Activated T-helper 2 cell treated with anti-CD3 and anti-CD28 coated beads, Interferon-gamma antibody, Interleukin-2, Interleukin-4, amounts not matched to agents 10 μg/mL and 5 μg/mL and 100 μg/mL, durations not matched to agents 14 hours and 24 hours and 36 hours (primary cell): ENCODE measurements at regions of chr14 and their contacts with region 1.

Region 1: DNA sequence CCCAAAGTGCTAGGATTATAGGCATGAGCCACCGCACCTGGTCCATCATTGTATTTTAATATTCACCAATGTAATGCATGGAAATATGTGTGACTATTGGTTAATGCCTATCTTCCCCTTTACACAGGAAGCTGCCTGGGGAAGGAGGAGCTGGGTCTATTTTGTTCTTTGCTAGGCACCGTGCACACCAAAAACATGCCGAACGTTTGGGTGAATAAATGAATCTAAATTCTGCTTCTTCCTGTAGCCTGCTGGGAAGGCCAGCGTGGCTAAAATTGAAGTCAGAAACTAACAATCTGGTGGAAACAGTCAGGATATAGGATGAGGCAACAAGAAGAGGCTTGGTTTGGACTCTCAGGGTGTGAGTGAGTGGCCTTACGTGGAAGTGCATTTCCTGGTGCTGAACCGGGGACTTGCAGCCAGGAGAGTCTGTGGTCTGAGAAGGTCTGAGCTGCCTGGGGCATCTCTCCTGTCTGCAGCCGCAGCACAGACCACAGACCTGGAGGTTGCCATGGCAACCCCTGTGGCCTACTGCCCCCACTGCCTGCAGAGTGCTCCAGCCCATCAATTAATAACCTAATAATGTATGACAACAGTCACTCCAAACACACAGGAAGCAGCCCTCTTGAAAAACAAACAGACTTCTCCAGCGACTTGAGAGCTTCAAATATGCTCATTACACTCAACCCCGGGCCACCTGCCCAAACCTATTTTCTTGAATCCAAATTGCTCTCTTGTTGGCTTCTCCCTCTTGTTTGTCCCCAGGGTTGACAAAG is 5.5 kb upstream of the GPR68 start:
- DNase-seq: peak; percentile 55
- H3K4me3 Mint-ChIP-seq: peak overlapping the region; percentile 23
- H3K27ac Mint-ChIP-seq: peak overlapping the region; percentile 92
- H3K4me1 Mint-ChIP-seq: peaks cover 68% of the 10 kb centered on the region
- H3K27me3 Mint-ChIP-seq: no peaks in the 10 kb centered on the region

Region 2: GRCh38 chr14:91177073-91178034 is 72.7 kb before region 1 on chr14:
- intact Hi-C with region 1: loop called (anchors 2 kb)
- DNase-seq: peak; percentile 69
- H3K4me3 Mint-ChIP-seq: no peak overlapping the region
- H3K27ac Mint-ChIP-seq: peak overlapping the region; percentile 86
- H3K4me1 Mint-ChIP-seq: peaks cover 17% of the 10 kb centered on the region
- H3K27me3 Mint-ChIP-seq: no peaks in the 10 kb centered on the region

Region 3: DNA sequence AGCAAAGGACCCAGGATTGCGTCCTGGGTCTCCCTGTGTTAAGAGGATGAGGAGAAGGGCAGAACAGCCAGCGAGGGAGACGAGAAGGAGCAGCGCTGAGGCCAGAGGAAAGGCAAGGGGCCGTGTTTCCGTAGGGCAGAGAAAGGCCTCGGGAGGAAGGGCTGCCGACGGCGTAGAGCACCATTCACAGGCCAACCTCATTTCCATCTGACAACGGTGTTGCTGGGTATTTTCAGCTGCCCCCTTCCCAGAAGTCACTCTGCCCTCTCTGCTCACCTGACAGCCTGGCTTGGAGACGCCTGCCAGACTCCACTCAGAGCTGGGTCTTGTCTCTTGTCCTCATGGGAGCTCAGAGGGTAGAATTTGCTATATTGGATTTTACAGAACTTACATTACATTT is 57.0 kb before region 1 on chr14:
- intact Hi-C with region 1: loop called (anchors 5 kb)
- DNase-seq: no peak
- H3K4me3 Mint-ChIP-seq: no peak overlapping the region
- H3K27ac Mint-ChIP-seq: no peak overlapping the region
- H3K4me1 Mint-ChIP-seq: peaks cover 37% of the 10 kb centered on the region
- H3K27me3 Mint-ChIP-seq: no peaks in the 10 kb centered on the region

Region 4: GRCh38 chr14:91228112-91229004 is 21.7 kb before region 1 on chr14:
- intact Hi-C with region 1: no loop called
- DNase-seq: peak; percentile 76
- H3K4me3 Mint-ChIP-seq: peak overlapping the region; percentile 75
- H3K27ac Mint-ChIP-seq: peak overlapping the region; percentile 100
- H3K4me1 Mint-ChIP-seq: peaks cover 80% of the 10 kb centered on the region
- H3K27me3 Mint-ChIP-seq: no peaks in the 10 kb centered on the region

Region 5: DNA sequence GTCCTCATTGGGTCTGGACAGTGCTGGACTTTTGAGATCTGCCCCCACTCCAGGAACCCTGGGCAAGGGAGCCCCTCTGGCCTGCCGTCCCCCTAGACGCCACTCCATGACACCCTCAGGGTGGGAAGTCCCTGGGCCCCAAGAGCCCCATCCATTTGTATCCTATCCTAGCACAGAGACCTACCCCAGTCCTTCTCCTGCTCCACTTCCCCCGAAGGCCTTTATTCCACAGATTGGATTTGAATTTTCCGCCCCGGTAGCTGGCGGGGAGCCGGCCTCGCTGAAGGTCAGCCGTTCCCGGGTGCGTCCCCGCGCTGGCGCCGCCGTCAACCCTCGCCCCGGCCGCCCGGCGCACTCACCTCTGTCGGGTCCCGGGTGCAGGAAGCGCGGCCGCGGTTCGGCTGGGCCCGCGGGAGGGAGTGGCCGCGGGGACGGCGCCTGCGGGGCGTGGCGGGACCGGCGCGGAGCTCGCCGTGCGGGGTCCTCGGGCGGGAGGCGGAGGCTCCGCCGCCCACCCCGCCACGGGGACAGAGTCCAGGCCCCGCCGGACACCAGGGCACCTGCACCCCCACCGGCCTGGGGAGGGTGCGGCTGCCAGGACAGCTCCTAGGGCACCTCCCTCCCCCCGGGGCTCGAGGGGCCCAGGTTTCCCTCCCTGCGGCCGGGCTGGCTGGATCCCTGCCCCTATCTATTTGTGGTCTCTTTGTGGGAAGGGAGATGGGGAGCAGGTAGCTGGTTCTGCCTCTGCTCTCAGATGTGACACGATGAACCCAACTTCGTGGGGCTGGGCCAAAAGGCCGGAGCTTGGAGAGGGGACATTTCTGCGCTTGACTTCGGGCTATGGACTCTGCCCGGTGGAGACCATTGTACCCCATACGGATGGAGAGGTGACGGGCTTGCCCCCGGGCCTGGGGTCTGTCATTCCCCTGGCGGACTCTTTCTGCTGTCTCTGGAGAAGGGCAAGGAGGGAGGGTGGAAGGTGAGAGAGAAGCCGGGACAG is 14.4 kb after region 1 on chr14:
- intact Hi-C with region 1: loop called (anchors 2 kb)
- DNase-seq: no peak
- H3K4me3 Mint-ChIP-seq: peak overlapping the region; percentile 47
- H3K27ac Mint-ChIP-seq: no peak overlapping the region
- H3K4me1 Mint-ChIP-seq: peaks cover 36% of the 10 kb centered on the region
- H3K27me3 Mint-ChIP-seq: no peaks in the 10 kb centered on the region

Region 6: GRCh38 chr14:91303091-91303923 is 53.3 kb after region 1 on chr14:
- intact Hi-C with region 1: loop called (anchors 5 kb)
- DNase-seq: peak; percentile 56
- H3K4me3 Mint-ChIP-seq: peak overlapping the region; percentile 27
- H3K27ac Mint-ChIP-seq: peak overlapping the region; percentile 97
- H3K4me1 Mint-ChIP-seq: peaks cover 46% of the 10 kb centered on the region
- H3K27me3 Mint-ChIP-seq: no peaks in the 10 kb centered on the region